ENCODE measurements at regions of chr12 and their contacts with region 1.

Region 1: GRCh38 chr12:66688846-66689439 is 10.1 kb upstream of the GRIP1 start:
- H3K4me3 Mint-ChIP-seq: no peak overlapping the region
- H3K27ac Mint-ChIP-seq: no peak overlapping the region
- H3K4me1 Mint-ChIP-seq: peaks cover 20% of the 10 kb centered on the region
- H3K27me3 Mint-ChIP-seq: no peaks in the 10 kb centered on the region

Region 2: DNA sequence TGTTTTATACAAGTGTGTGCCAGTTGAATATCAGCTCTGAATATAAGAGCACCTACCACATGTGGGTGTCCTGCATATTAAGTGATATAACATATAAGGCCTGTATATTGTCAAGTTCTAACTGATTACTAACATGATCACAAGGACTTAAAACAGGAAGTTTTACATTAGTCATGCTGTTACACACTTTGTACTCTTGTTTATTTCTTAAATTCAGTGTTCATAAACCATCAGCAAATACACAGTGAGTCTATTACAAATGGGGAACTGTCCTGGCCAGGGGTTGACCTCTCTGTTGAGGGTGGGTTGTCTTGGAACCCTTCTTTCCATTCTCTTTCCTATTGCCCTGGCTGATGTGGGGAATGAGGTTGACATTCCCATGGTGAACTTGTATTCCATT is 367.5 kb before region 1 on chr12:
- intact Hi-C with region 1: no loop called
- H3K4me3 Mint-ChIP-seq: no peak overlapping the region
- H3K27ac Mint-ChIP-seq: peak overlapping the region; percentile 75
- H3K4me1 Mint-ChIP-seq: peaks cover 17% of the 10 kb centered on the region
- H3K27me3 Mint-ChIP-seq: no peaks in the 10 kb centered on the region

Region 3: GRCh38 chr12:66624806-66625205 is 64.1 kb before region 1 on chr12:
- intact Hi-C with region 1: no loop called
- H3K4me3 Mint-ChIP-seq: no peak overlapping the region
- H3K27ac Mint-ChIP-seq: no peak overlapping the region
- H3K4me1 Mint-ChIP-seq: peaks cover 40% of the 10 kb centered on the region
- H3K27me3 Mint-ChIP-seq: no peaks in the 10 kb centered on the region

Region 4: GRCh38 chr12:66725031-66725430 is 36.1 kb after region 1 on chr12:
- intact Hi-C with region 1: no loop called
- H3K4me3 Mint-ChIP-seq: no peak overlapping the region
- H3K27ac Mint-ChIP-seq: no peak overlapping the region
- H3K4me1 Mint-ChIP-seq: no peaks in the 10 kb centered on the region
- H3K27me3 Mint-ChIP-seq: no peaks in the 10 kb centered on the region

Region 5: DNA sequence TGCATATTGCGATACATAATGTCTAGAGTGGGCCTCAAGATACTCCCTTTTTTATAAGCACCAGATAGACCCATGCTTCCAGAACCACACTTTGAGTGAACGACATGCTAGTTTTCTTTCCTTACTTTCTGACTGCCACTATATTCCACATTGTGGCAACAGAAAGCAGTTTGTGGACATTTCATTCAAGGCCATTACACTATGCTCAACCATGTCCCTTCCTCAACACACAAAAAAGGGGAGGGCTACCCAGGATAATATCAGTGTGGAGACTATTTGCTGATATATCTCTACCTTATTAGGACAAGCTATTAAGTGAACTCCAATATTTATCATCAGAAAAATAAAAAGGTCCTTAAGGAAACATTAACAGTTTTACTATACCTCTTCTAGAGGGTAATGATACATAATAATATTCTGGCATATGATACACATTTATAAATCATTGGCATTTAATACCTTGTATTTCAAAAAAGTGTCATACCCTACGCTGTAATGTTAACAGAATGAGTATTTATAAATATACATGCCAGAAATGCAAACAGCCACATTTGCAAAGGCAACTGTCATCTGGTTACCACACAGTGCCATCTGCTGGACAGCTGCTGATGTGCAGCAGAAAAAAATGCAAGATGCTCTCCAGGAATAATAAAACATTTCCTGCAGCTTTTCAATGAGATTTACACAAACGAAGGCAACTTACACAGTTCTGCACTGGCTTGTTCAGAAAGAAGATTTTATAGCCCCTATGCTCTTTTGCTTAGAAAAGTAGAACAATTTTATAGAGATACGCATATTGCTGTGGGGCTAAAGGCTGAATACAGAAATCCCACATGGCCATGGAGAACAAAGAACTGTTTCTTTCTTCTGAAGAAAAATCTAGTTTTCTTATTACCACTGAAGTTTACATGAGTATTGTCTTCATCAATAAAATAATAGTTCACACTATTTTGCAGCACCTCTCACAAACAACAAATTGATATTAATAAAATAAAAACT is 172.1 kb after region 1 on chr12:
- intact Hi-C with region 1: loop called (anchors 1 kb)
- H3K4me3 Mint-ChIP-seq: no peak overlapping the region
- H3K27ac Mint-ChIP-seq: no peak overlapping the region
- H3K4me1 Mint-ChIP-seq: no peaks in the 10 kb centered on the region
- H3K27me3 Mint-ChIP-seq: no peaks in the 10 kb centered on the region